Stomach (tissue), 19 donors: ENCODE measurements at regions of chr10 and their contacts with region 1.

Region 1: DNA sequence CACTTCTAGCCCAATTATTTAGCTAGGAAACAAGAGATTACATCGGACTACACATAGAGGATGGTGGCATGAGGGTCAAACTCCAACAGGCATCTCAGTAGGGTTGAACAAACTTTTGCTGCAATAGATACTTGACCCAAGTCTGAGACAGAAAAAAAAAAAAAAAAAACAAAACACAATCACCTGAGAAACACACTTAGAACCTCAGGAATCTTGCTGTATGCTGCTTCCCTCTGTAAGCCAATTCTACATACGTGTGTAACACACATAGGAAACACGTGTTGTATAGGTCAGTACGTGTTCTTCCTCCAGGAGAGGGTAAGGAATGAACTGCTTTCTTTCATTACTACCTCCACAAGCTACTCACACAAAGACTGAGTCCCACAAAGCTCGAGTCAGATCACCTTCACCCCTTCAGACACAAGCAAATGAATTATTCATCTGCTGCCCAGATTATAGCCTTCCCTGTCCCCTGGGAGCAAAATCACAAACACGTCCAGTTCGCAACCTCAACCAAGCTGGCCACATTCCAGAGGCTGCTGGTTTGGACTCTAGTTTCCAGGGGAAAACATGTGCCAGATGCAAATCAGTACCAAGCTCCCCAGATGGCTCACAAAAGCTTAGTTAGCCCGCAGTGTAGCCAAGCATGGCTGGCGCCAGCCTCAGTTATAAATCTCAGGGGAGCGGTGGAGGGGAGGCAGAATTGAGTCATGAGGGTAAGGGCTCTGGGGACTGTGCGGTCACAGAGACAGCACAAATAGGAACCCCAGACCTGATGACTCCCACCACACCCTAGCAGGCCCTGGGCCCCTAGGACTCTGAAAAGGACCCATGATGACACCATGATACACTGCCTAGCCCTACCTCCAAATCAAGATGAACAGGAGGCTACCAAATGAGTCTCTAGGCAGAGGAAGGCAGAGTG is 15.1 kb downstream of the PSAP start:
- DNase-seq: peak; percentile 75 to 81
- H3K4me3 ChIP-seq: no peak overlapping the region
- H3K27ac ChIP-seq: peak overlapping the region; percentile 28 to 76 (median 70)
- H3K4me1 ChIP-seq: peaks cover 48 to 100% (median 86%) of the 10 kb centered on the region in 4 donors
- H3K27me3 ChIP-seq: no peaks in the 10 kb centered on the region
- CTCF ChIP-seq: no peak
- EP300 ChIP-seq: no peak
- POLR2A ChIP-seq: no peak

Region 2: GRCh38 chr10:71893920-71894319 is 58.0 kb after region 1 on chr10:
- intact Hi-C with region 1: loop called (anchors 10 kb)
- DNase-seq: no peak
- H3K4me3 ChIP-seq: no peak overlapping the region
- H3K27ac ChIP-seq: no peak overlapping the region
- H3K4me1 ChIP-seq: peaks cover 5 to 31% (median 13%) of the 10 kb centered on the region in 4 donors
- H3K27me3 ChIP-seq: no peaks in the 10 kb centered on the region
- CTCF ChIP-seq: no peak
- EP300 ChIP-seq: no peak
- POLR2A ChIP-seq: no peak